CD8-positive, alpha-beta T cell (primary cell): ENCODE measurements at regions of chr2 and their contacts with region 1.

Region 1: GRCh38 chr2:9914384-9915065 is 37.0 kb upstream of the GRHL1 start:
- DNase-seq: peak in 2 of 9 experiments; percentile 4 to 11
- ATAC-seq: no peak
- H3K4me3 ChIP-seq: no peak overlapping the region
- H3K4me3 Mint-ChIP-seq: no peak overlapping the region
- H3K27ac ChIP-seq: no peak overlapping the region
- H3K27ac Mint-ChIP-seq: no peak overlapping the region
- H3K4me1 ChIP-seq: no peaks in the 10 kb centered on the region
- H3K4me1 Mint-ChIP-seq: no peaks in the 10 kb centered on the region
- H3K27me3 ChIP-seq: no peaks in the 10 kb centered on the region
- H3K27me3 Mint-ChIP-seq: no peaks in the 10 kb centered on the region
- CTCF ChIP-seq: no peak

Region 2: DNA sequence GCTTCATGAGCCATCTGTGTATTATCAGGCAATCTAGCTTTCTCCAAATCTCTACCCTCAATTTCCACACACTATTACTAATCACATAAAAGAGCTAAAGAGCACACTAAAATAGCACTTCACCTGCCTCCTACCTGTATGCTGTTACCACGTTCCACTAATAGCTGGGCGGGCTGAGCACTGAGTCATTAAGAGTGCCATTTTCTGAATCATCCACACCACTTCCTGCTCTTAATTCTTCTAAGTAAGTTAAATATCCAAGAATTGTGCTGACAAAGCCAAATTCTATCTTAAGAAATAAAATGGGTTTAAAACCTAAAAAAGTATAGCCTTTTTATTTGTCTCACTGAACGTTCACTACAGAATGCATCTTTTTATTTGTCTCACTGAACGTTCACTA is 739.5 kb after region 1 on chr2:
- CTCF ChIA-PET with region 1: no interaction called
- POLR2A ChIA-PET with region 1: no interaction called
- intact Hi-C with region 1: loop called in 1 of 2 experiments (anchors 5 kb)
- DNase-seq: peak in 7 of 9 experiments; percentile 14 to 49 (median 18)
- ATAC-seq: peak; percentile 87
- H3K4me3 ChIP-seq: no peak overlapping the region
- H3K4me3 Mint-ChIP-seq: no peak overlapping the region
- H3K27ac ChIP-seq: no peak overlapping the region
- H3K27ac Mint-ChIP-seq: no peak overlapping the region
- H3K4me1 ChIP-seq: no peaks in the 10 kb centered on the region
- H3K4me1 Mint-ChIP-seq: peaks cover 21% of the 10 kb centered on the region
- H3K27me3 ChIP-seq: no peaks in the 10 kb centered on the region
- H3K27me3 Mint-ChIP-seq: no peaks in the 10 kb centered on the region
- CTCF ChIP-seq: no peak